ENCODE measurements at regions of chr2 and their contacts with region 1.

Region 1: GRCh38 chr2:159968279-159968900 is 94.0 kb downstream of the PLA2R1 start:
- DNase-seq: peak; percentile 41
- ATAC-seq: peak; percentile 68; the same call in 1 of the 2 replicates
- H3K4me3 ChIP-seq: no peak overlapping the region
- H3K27ac ChIP-seq: no peak overlapping the region
- H3K4me1 ChIP-seq: no peaks in the 10 kb centered on the region
- H3K27me3 ChIP-seq: no peaks in the 10 kb centered on the region
- CTCF ChIP-seq: peak; percentile 58
- POLR2A ChIP-seq: no peak
- RAD21 ChIP-seq: peak; percentile 70

Region 2: GRCh38 chr2:158893026-158893425 is 1075.4 kb before region 1 on chr2:
- CTCF ChIA-PET with region 1: no interaction called
- POLR2A ChIA-PET with region 1: no interaction called
- dilution Hi-C with region 1: no loop called
- in situ Hi-C with region 1: loop called (anchors 25 kb)
- intact Hi-C with region 1: no loop called
- DNase-seq: peak; percentile 60
- ATAC-seq: peak; percentile 82
- H3K4me3 ChIP-seq: no peak overlapping the region
- H3K27ac ChIP-seq: peak overlapping the region; percentile 9; the same call in 1 of the 2 replicates
- H3K4me1 ChIP-seq: peaks cover 9% of the 10 kb centered on the region
- H3K27me3 ChIP-seq: no peaks in the 10 kb centered on the region
- CTCF ChIP-seq: no peak
- POLR2A ChIP-seq: no peak
- RAD21 ChIP-seq: no peak

Region 3: DNA sequence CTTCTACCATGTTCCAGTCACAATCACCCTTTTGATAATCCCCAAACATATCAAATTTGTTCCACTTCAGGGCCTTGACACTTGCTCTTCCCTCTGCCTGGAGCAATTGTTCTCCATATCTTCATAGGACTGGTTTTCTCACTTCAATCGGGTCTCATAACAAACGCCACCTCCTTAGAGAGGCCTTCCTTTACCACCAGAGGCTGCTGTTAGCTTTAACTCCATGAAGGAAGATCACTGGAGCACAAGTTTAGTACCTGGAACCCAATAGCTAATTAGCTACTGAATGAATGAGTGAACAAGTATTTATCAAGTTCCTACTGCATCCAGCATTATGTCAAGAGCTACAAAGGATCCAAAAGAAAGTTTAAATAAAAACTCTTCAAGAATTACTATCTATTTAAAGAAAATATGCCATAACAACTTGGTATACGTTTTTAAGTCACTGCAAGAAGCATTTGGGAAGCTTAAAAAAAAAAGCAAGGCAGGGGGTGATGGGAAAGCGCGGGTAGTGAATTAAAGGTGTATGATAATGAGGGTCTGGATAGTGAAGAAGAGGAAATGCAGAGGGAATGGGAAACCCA is 410.8 kb before region 1 on chr2:
- CTCF ChIA-PET with region 1: no interaction called
- POLR2A ChIA-PET with region 1: no interaction called
- dilution Hi-C with region 1: no loop called
- in situ Hi-C with region 1: no loop called
- intact Hi-C with region 1: no loop called
- DNase-seq: peak; percentile 8
- ATAC-seq: no peak
- H3K4me3 ChIP-seq: no peak overlapping the region
- H3K27ac ChIP-seq: no peak overlapping the region
- H3K4me1 ChIP-seq: no peaks in the 10 kb centered on the region
- H3K27me3 ChIP-seq: no peaks in the 10 kb centered on the region
- CTCF ChIP-seq: peak; percentile 24; the same call in 1 of the 2 replicates
- POLR2A ChIP-seq: no peak
- RAD21 ChIP-seq: no peak